ENCODE measurements at regions of chr17 and their contacts with region 1.

Region 1: GRCh38 chr17:68457539-68458259 is 403 bp upstream of the WIPI1 start:
- DNase-seq: peak; percentile 99
- ATAC-seq: peak; percentile 94
- H3K4me3 Mint-ChIP-seq: peak overlapping the region; percentile 75
- H3K27ac Mint-ChIP-seq: peak overlapping the region; percentile 94
- H3K4me1 Mint-ChIP-seq: peaks cover 81% of the 10 kb centered on the region
- H3K27me3 Mint-ChIP-seq: no peaks in the 10 kb centered on the region

Region 2: GRCh38 chr17:68184816-68185436 is 272.8 kb before region 1 on chr17:
- CTCF ChIA-PET with region 1: interaction called, 27 read pairs
- DNase-seq: peak; percentile 80
- ATAC-seq: peak; percentile 69
- H3K4me3 Mint-ChIP-seq: peak overlapping the region; percentile 85
- H3K27ac Mint-ChIP-seq: peak overlapping the region; percentile 92
- H3K4me1 Mint-ChIP-seq: peaks cover 63% of the 10 kb centered on the region
- H3K27me3 Mint-ChIP-seq: no peaks in the 10 kb centered on the region

Region 3: DNA sequence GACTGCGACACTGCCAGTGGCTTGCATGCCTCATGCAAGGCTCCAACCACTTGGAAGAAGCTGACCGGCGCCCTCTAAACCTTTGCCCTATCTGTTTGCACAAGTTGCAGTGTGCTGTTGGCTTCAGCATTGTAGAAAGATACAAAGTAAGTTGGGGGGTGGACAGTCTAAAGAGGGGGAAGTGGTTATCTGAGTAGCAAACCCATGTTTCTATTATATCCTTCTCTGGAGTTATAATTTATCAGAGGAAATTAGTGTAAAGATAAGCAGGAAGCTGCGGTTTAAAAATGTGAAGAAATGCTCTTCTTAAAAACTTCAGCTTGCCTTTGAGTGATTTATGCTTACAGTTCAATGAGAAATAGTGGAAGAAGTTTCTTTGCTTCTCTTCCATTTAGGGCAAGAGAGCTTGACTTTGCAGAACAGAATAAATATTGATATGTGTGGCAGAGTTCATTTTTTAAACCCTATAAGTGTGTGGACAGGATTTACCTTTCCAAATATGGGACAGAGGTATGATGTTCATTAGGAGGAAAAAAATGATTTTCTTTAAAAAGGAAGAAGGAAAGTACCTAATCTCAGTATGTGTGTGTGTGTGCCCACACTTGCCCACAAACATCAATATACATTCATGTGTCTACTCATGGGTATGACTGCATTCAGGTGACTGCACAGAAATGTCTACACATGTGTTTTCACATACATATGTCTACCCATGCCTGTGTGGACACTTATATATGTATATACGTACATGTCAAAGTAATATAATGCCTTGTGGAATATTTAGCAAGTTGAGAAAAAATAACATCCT is 201.8 kb before region 1 on chr17:
- CTCF ChIA-PET with region 1: interaction called, 48 read pairs
- DNase-seq: no peak
- ATAC-seq: peak; percentile 14
- H3K4me3 Mint-ChIP-seq: peak overlapping the region; percentile 17
- H3K27ac Mint-ChIP-seq: peak overlapping the region; percentile 88
- H3K4me1 Mint-ChIP-seq: peaks cover 82% of the 10 kb centered on the region
- H3K27me3 Mint-ChIP-seq: no peaks in the 10 kb centered on the region

Region 4: GRCh38 chr17:68613739-68614298 is 156.1 kb after region 1 on chr17:
- CTCF ChIA-PET with region 1: no interaction called
- DNase-seq: peak; percentile 57
- ATAC-seq: peak; percentile 75
- H3K4me3 Mint-ChIP-seq: no peak overlapping the region
- H3K27ac Mint-ChIP-seq: no peak overlapping the region
- H3K4me1 Mint-ChIP-seq: no peaks in the 10 kb centered on the region
- H3K27me3 Mint-ChIP-seq: peaks cover 39% of the 10 kb centered on the region

Measured in activated CD8-positive, alpha-beta memory T cell treated with anti-CD3 and anti-CD28 coated beads, Interleukin-2, amount 10 ng/mL, durations not matched to agents 7 days and 5 days (primary cell).